A549 (cell line): ENCODE measurements at regions of chr15 and their contacts with region 1.

Region 1: DNA sequence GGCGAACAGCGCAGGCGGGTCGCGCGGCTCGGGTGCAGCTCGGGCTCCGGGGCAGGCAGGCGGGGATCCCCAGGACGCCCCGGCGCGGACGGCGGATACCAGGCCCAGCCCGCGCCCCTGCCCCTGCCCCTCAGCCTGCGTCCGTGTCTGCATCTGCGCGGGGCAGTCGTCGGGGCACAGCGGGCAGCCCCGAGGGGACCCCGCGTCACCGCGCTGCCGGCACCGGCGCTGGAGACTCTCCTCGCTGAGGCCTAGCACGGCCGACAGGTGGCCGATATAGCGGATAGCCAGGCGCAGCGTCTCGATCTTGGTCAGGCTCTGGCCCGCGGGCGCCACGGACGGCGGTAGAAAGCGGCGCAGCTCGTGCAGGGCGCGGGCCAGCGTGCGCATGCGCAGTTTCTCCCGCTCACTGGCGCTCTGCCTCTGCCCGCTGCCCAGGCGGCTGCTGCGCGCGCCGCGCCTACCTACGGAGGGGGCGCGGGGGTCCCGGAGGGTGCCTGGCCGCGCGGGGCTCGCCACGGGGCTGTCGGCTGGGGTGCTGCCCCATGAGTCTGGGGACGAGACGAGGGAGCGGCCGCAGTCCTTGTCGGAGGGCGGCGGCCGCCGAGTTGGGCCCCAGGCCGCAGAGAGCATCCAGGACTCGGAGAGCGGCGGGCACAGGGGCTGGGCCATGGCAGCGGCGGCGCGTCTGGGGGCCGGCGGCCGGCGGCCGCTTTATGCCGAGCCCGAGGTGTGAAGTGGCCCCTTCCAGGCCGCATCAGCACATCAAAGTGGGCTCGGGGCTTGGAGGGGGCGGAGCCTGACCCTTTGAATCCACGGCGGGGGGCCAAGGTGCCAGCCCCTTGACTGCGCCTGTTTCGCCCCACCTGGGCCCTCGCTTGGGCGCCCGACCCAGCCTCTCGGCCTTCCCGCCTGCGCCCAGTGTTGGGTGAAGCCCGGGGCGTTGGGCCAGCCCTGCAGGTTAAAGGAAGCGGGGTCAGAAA is at the start of gene MESP1:
- DNase-seq: peak; percentile 96
- ATAC-seq: peak; percentile 94 to 98
- H3K4me3 ChIP-seq: peak within 1 kb of the TSS; percentile 60
- H3K27ac ChIP-seq: peak within 1 kb of the TSS; percentile 81 to 91
- H3K4me1 ChIP-seq: peaks cover 23% of the 10 kb centered on the region
- CTCF ChIP-seq: peak; percentile 74
- EP300 ChIP-seq: no peak
- POLR2A ChIP-seq: peak; percentile 93
- RAD21 ChIP-seq: peak; percentile 51 to 64
- polyA plus RNA-seq, gene MESP1: 1.2 and 1.7 TPM in 2 replicates

Region 2: GRCh38 chr15:89714775-89715174 is 36.1 kb before region 1 on chr15:
- CTCF ChIA-PET with region 1: no interaction called
- POLR2A ChIA-PET with region 1: no interaction called
- DNase-seq: no peak
- ATAC-seq: no peak
- H3K4me3 ChIP-seq: no peak overlapping the region
- H3K27ac ChIP-seq: no peak overlapping the region
- H3K4me1 ChIP-seq: no peaks in the 10 kb centered on the region
- CTCF ChIP-seq: no peak
- EP300 ChIP-seq: no peak
- POLR2A ChIP-seq: no peak
- RAD21 ChIP-seq: no peak

Region 3: GRCh38 chr15:89740137-89740536 is 10.7 kb before region 1 on chr15:
- CTCF ChIA-PET with region 1: interaction called, 32 read pairs
- POLR2A ChIA-PET with region 1: interaction called, 7 read pairs
- DNase-seq: peak; percentile 83 to 85
- ATAC-seq: peak; percentile 87 to 95
- H3K4me3 ChIP-seq: no peak overlapping the region
- H3K27ac ChIP-seq: peak overlapping the region in 1 of 2 experiments; percentile 36; a peak in 1 of 6 replicates
- H3K4me1 ChIP-seq: no peaks in the 10 kb centered on the region
- CTCF ChIP-seq: peak; percentile 96
- EP300 ChIP-seq: no peak
- POLR2A ChIP-seq: no peak
- RAD21 ChIP-seq: peak; percentile 89 to 95

Region 4: GRCh38 chr15:89776274-89777072 is 25.6 kb after region 1 on chr15 and contains the start of gene MESP2:
- CTCF ChIA-PET with region 1: interaction called, 222 read pairs
- POLR2A ChIA-PET with region 1: no interaction called
- DNase-seq: peak; percentile 73 to 90
- ATAC-seq: peak; percentile 87 to 96
- H3K4me3 ChIP-seq: peak within 1 kb of the TSS; percentile 38
- H3K27ac ChIP-seq: peak within 1 kb of the TSS; percentile 71 to 89
- H3K4me1 ChIP-seq: peaks cover 24% of the 10 kb centered on the region
- CTCF ChIP-seq: no peak
- EP300 ChIP-seq: no peak
- POLR2A ChIP-seq: peak; percentile 67
- RAD21 ChIP-seq: peak in 1 of 2 experiments; percentile 26; a peak in 2 of 5 replicates
- polyA plus RNA-seq, gene MESP2: 0.22 and 0.24 TPM in 2 replicates